Gastrocnemius medialis (tissue), 4 donors: ENCODE measurements at regions of chr1 and their contacts with region 1.

Region 1: GRCh38 chr1:15617175-15617880 is at the start of gene DDI2:
- DNase-seq: peak; percentile 96 to 97
- ATAC-seq: peak; percentile 80 to 88
- H3K4me3 ChIP-seq: peak within 1 kb of the TSS; percentile 71 to 93 (median 82)
- H3K27ac ChIP-seq: peak within 1 kb of the TSS; percentile 93 to 98 (median 95)
- H3K4me1 ChIP-seq: peaks cover 31 to 44% of the 10 kb centered on the region in 2 donors
- H3K27me3 ChIP-seq: no peaks in the 10 kb centered on the region
- CTCF ChIP-seq: peak in 1 of 5 experiments; percentile 20
- POLR2A ChIP-seq: peak; percentile 99
- total RNA-seq, gene DDI2: 19.0 to 86.7 (median 34.2) TPM

Region 2: DNA sequence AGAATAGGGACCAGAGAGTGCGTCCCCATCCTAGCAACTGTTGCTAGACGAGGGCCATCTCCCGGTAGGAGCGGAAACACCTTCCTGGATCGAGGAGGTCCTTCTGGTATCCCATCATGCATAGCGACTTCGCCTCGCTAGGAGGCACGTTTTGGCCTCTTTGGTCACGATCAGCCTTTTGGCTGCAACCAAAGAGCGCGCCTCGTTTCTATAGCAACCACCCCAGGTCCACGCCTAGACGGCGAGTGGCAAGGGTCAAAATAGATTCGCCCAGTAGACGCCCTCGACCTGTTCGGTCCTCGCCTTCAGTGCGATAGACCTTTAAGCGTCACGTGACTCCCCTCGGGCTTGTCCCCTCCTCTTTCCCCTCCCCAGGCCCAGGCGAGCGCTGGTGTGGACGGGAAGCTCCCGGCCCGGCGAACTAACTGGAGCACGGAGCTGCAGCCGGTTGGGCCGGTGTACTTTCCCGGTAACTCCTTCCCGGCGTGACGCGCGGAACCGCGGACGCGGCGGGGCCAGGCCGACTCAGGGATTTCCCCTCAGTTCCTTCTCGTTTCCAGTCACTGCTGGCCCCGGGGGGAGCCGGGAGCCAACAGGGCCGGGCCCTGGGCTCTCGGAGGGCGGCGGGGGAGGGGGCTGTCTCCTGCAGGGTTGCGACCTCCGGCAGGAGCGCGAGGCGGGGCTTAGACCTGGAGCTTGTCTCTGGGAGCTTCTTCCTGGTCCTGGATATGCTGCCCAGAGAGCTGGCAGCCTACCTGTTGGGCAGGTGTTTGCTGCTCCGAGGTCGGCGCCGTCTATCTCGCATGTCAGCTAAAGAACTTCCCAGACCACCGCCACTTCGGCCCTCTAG is 90.6 kb before region 1 on chr1 and contains the start of gene DNAJC16:
- in situ Hi-C with region 1: no loop called
- intact Hi-C with region 1: loop called (anchors 1 kb)
- DNase-seq: peak; percentile 100
- ATAC-seq: peak; percentile 77 to 81
- H3K4me3 ChIP-seq: peak within 1 kb of the TSS; percentile 92 to 99 (median 96)
- H3K27ac ChIP-seq: peak within 1 kb of the TSS; percentile 97 to 99 (median 98)
- H3K4me1 ChIP-seq: peaks cover 24 to 34% of the 10 kb centered on the region in 2 donors
- H3K27me3 ChIP-seq: no peaks in the 10 kb centered on the region
- CTCF ChIP-seq: peak in 3 of 5 experiments; percentile 24 to 65 (median 50)
- POLR2A ChIP-seq: peak; percentile 72 to 78
- total RNA-seq, gene DNAJC16: 20.0 to 43.1 (median 22.6) TPM

Region 3: GRCh38 chr1:15603050-15603965 is 14.0 kb before region 1 on chr1:
- in situ Hi-C with region 1: no loop called
- intact Hi-C with region 1: loop called (anchors 1 kb)
- DNase-seq: peak; percentile 98
- ATAC-seq: peak; percentile 88 to 90
- H3K4me3 ChIP-seq: peak overlapping the region; percentile 58 to 86 (median 72)
- H3K27ac ChIP-seq: peak overlapping the region; percentile 82 to 93 (median 86)
- H3K4me1 ChIP-seq: peaks cover 19 to 31% of the 10 kb centered on the region in 2 donors
- H3K27me3 ChIP-seq: no peaks in the 10 kb centered on the region
- CTCF ChIP-seq: no peak
- POLR2A ChIP-seq: peak; percentile 71 to 89

Region 4: GRCh38 chr1:15684468-15685291 is 67.4 kb after region 1 on chr1:
- in situ Hi-C with region 1: no loop called
- intact Hi-C with region 1: loop called (anchors 5 kb)
- DNase-seq: peak in 1 of 2 donors; percentile 59
- ATAC-seq: peak; percentile 13 to 18
- H3K4me3 ChIP-seq: peak overlapping the region; percentile 66 to 92 (median 78)
- H3K27ac ChIP-seq: peak overlapping the region; percentile 90 to 97 (median 93)
- H3K4me1 ChIP-seq: peaks cover 53 to 57% of the 10 kb centered on the region in 2 donors
- H3K27me3 ChIP-seq: no peaks in the 10 kb centered on the region
- CTCF ChIP-seq: peak in 3 of 5 experiments; percentile 17 to 19 (median 19)
- POLR2A ChIP-seq: peak; percentile 51 to 78

Region 5: GRCh38 chr1:15703562-15703961 is 86.2 kb after region 1 on chr1:
- in situ Hi-C with region 1: no loop called
- intact Hi-C with region 1: loop called (anchors 2 kb)
- DNase-seq: peak; percentile 71 to 79
- ATAC-seq: peak; percentile 40 to 46
- H3K4me3 ChIP-seq: no peak overlapping the region
- H3K27ac ChIP-seq: peak overlapping the region; percentile 93 to 96 (median 96)
- H3K4me1 ChIP-seq: peaks cover 53 to 67% of the 10 kb centered on the region in 2 donors
- H3K27me3 ChIP-seq: no peaks in the 10 kb centered on the region
- CTCF ChIP-seq: no peak
- POLR2A ChIP-seq: peak; percentile 44 to 72

Region 6: GRCh38 chr1:15736038-15736889 is 118.9 kb after region 1 on chr1 and contains the start of gene SLC25A34:
- in situ Hi-C with region 1: no loop called
- intact Hi-C with region 1: loop called (anchors 1 kb)
- DNase-seq: peak; percentile 93 to 97
- ATAC-seq: peak; percentile 76 to 80
- H3K4me3 ChIP-seq: peak within 1 kb of the TSS; percentile 20 to 47 (median 32)
- H3K27ac ChIP-seq: peak within 1 kb of the TSS; percentile 86 to 96 (median 94)
- H3K4me1 ChIP-seq: peaks cover 42 to 47% of the 10 kb centered on the region in 2 donors
- H3K27me3 ChIP-seq: no peaks in the 10 kb centered on the region
- CTCF ChIP-seq: peak in 1 of 5 experiments; percentile 13
- POLR2A ChIP-seq: peak; percentile 81 to 85
- total RNA-seq, gene SLC25A34: 7.8 to 17.2 (median 13.8) TPM

Region 7: GRCh38 chr1:16017461-16018303 is 400.4 kb after region 1 on chr1 and contains the start of gene HSPB7:
- in situ Hi-C with region 1: no loop called
- intact Hi-C with region 1: loop called (anchors 5 kb)
- DNase-seq: peak; percentile 91 to 97
- ATAC-seq: peak; percentile 20 to 26
- H3K4me3 ChIP-seq: peak within 1 kb of the TSS; percentile 68 to 82 (median 76)
- H3K27ac ChIP-seq: peak within 1 kb of the TSS; percentile 97 to 100 (median 98)
- H3K4me1 ChIP-seq: peaks cover 43 to 59% of the 10 kb centered on the region in 2 donors
- H3K27me3 ChIP-seq: no peaks in the 10 kb centered on the region
- CTCF ChIP-seq: peak in 2 of 5 experiments; percentile 20 to 29
- POLR2A ChIP-seq: peak in 1 of 2 donors; percentile 97
- total RNA-seq, gene HSPB7: 355 to 1,466 (median 716) TPM